Esophagus muscularis mucosa (tissue), 4 donors: ENCODE measurements at regions of chr11 and their contacts with region 1.

Region 1: DNA sequence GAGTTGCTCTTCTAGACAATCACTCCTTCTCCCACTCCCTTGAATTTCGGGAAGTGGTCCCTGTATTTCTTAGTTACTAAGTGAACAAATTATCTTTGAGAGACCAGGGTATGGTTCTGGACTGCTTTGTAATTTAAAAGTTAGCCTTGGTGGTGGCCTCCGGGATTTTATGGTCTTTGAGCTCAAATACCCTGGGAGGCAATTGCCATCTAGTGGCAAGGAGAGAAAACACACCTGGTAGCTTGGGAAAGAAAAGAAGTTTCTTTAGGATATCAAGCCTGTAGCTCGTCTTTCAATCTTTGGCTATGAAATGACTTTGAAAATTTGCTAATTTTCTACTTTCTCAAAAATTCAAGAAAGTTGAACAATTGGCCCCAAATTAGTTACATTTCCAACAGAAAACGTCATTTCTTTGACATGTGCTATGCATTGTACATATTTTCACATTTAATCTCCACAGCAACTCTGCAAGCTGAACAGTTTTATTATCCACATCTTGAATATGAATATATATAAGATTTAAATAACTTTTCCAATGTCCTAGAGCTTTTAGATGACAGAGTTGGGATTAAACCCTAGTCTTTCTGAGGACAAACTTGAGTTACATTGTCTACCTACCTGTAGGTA is 39.1 kb downstream of the MMP27 start:
- DNase-seq: no peak
- H3K4me3 ChIP-seq: no peak overlapping the region
- H3K27ac ChIP-seq: no peak overlapping the region
- H3K4me1 ChIP-seq: no peaks in the 10 kb centered on the region
- H3K27me3 ChIP-seq: no peaks in the 10 kb centered on the region
- CTCF ChIP-seq: peak; percentile 63 to 81 (median 63)
- EP300 ChIP-seq: no peak
- POLR2A ChIP-seq: no peak

Region 2: GRCh38 chr11:102293873-102294601 is 372.4 kb before region 1 on chr11:
- intact Hi-C with region 1: loop called (anchors 10 kb)
- DNase-seq: no peak
- H3K4me3 ChIP-seq: no peak overlapping the region
- H3K27ac ChIP-seq: no peak overlapping the region
- H3K4me1 ChIP-seq: peaks cover 0 to 19% (median 13%) of the 10 kb centered on the region in 4 donors
- H3K27me3 ChIP-seq: no peaks in the 10 kb centered on the region
- CTCF ChIP-seq: peak; percentile 56 to 72 (median 57)
- EP300 ChIP-seq: no peak
- POLR2A ChIP-seq: no peak

Region 3: DNA sequence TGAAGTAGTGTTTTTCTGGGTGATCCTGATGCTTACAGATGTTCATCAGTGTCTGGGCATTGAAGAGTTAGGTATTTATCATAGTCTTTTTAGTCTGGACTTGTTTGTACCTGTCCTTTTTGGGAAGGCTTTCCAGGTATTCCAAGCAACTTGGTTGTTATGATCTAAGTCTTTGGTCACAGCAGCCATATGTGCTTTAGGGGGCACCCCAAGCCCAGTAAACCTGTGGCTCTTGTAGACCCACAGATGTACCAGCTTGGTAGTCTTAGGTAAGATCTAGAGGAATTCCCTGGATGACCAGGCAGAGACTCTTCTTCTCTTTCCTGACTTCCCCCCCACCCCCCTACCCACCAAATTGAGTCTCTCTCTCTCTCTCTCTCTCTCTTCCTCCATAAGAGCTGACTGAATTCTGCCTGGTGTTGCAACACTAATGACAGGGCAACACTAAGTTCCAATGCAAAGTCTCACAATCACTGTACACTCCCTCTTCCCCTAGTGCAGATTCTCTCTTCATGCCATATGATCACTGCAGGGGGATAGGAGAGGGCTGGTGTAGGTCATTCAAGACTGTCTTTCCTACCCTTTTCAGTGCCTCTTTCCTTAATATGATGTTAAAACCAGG is 82.8 kb after region 1 on chr11:
- intact Hi-C with region 1: no loop called
- DNase-seq: no peak
- H3K4me3 ChIP-seq: no peak overlapping the region
- H3K27ac ChIP-seq: no peak overlapping the region
- H3K4me1 ChIP-seq: no peaks in the 10 kb centered on the region
- H3K27me3 ChIP-seq: no peaks in the 10 kb centered on the region
- CTCF ChIP-seq: no peak
- EP300 ChIP-seq: no peak
- POLR2A ChIP-seq: no peak